Sciatic nerve (tissue), 2 donors: ENCODE measurements at regions of chr4 and their contacts with region 1.

Region 1: DNA sequence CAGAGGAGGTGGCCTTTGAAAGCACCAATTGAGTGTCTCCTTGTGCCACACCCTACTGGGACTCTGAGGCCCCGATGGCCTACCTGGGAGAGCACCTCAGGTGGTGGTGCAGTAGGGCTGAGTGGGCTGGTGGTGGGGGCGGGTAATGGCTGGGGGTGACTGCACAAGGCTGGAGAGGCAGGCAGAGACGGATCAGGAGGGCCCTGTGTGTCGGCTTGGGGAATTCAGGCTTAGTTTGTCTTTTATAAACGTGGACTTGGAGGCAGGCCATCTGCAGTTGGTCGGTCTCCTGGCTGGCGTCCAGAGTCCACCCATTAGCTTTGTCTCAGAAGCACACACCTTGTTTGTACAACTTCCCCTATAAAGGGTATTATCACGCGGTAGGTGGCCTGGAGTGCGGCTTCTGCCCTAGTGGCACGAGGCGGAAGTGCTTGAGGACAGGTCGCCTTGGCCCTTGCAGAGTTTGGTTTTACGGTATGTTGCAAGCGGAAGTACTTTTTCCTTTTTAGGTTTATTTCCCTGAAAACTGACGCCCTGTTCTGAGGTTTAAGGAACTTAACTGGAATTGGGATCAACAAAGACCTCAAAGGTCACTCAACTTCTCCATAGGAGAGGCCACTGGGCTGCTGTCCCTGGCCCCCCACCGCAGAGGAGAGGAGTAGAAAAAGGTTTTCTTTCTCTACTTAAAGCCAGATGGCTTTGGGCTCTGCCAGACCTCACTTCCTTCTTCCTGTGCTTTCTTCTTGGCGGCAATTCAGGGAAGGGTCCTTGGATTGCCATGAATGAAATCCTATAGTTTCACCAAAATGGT is 8.0 kb downstream of the TBC1D14 start:
- DNase-seq: peak; percentile 77
- ATAC-seq: peak; percentile 77

Region 2: GRCh38 chr4:6974138-6974848 is 56.6 kb after region 1 on chr4:
- intact Hi-C with region 1: loop called (anchors 10 kb)
- DNase-seq: peak; percentile 93
- ATAC-seq: peak; percentile 96

Region 3: DNA sequence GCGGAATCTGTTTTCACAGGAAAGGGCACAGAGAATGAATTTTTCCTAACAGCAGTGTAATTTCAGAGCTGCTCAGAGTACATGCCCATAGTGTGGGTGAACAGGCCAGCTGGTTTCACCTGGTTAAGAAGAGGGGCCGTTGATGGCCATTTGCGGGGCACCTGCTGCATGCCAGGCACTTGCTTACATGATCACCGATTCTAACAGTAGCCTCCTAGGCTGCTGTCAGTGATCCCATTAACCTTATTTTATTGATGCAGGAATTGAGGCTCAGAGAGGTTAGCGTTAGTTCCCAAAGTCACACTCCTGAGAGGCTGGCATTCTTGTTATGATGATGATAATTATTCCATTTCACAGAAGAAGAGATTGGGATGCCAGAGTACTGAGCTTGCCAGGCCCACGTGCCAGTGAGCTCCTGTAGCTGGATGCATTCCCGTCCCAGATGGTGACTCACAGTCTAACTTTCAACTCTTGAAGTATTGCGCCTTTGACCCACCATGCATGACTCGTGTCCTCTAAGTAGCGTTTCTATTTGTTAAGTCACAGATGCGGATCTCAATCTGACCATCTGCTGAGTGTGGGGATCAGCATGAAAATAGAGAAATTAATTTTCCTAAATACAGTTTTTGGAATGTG is 440.6 kb after region 1 on chr4:
- intact Hi-C with region 1: no loop called
- DNase-seq: no peak
- ATAC-seq: peak; percentile 49